ENCODE measurements at regions of chr17 and their contacts with region 1.

Region 1: GRCh38 chr17:29111816-29112499 is 68.2 kb downstream of the MYO18A start:
- DNase-seq: peak; percentile 71
- H3K4me3 Mint-ChIP-seq: no peak overlapping the region
- H3K27ac Mint-ChIP-seq: no peak overlapping the region
- H3K4me1 Mint-ChIP-seq: peaks cover 3% of the 10 kb centered on the region
- H3K27me3 Mint-ChIP-seq: no peaks in the 10 kb centered on the region

Region 2: GRCh38 chr17:29124117-29124924 is 12.4 kb after region 1 on chr17:
- CTCF ChIA-PET with region 1: interaction called, 140 read pairs
- POLR2A ChIA-PET with region 1: interaction called, 3 read pairs
- DNase-seq: peak; percentile 53
- H3K4me3 Mint-ChIP-seq: no peak overlapping the region
- H3K27ac Mint-ChIP-seq: no peak overlapping the region
- H3K4me1 Mint-ChIP-seq: peaks cover 8% of the 10 kb centered on the region
- H3K27me3 Mint-ChIP-seq: no peaks in the 10 kb centered on the region

Measured in activated CD4-positive, alpha-beta memory T cell treated with anti-CD3 and anti-CD28 coated beads, Interleukin-2, amount 10 ng/mL, durations not matched to agents 7 days and 5 days (primary cell).